ENCODE measurements at regions of chr20 and their contacts with region 1.

Region 1: GRCh38 chr20:21342656-21343345 is 39.7 kb downstream of the XRN2 start:
- DNase-seq: no peak
- H3K4me3 Mint-ChIP-seq: no peak overlapping the region
- H3K27ac Mint-ChIP-seq: no peak overlapping the region
- H3K4me1 Mint-ChIP-seq: no peaks in the 10 kb centered on the region
- H3K27me3 Mint-ChIP-seq: no peaks in the 10 kb centered on the region

Region 2: GRCh38 chr20:21361266-21361665 is 18.5 kb after region 1 on chr20:
- intact Hi-C with region 1: loop called (anchors 2 kb)
- DNase-seq: no peak
- H3K4me3 Mint-ChIP-seq: no peak overlapping the region
- H3K27ac Mint-ChIP-seq: peak overlapping the region; percentile 31
- H3K4me1 Mint-ChIP-seq: peaks cover 22% of the 10 kb centered on the region
- H3K27me3 Mint-ChIP-seq: no peaks in the 10 kb centered on the region

Region 3: DNA sequence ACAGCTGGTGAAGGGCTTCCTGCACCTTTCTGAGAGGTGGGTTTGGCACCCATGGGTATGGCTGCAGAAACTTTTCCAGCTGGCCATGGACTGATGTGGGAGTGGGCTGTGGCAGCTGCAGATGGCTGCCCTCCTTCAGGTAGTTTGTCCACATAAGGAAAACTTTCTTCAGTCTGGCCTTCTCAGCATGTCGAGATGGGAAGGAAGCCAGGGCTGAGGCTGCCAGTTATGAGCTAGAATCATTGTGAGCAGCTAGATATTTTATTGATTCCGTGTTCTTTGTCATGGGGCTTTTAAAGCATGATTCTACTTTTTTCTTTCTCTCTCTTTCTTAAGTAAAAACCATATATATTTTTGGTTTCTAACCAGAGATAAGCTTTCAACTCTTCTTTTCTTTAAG is 37.9 kb after region 1 on chr20:
- intact Hi-C with region 1: loop called (anchors 5 kb)
- DNase-seq: no peak
- H3K4me3 Mint-ChIP-seq: no peak overlapping the region
- H3K27ac Mint-ChIP-seq: no peak overlapping the region
- H3K4me1 Mint-ChIP-seq: peaks cover 7% of the 10 kb centered on the region
- H3K27me3 Mint-ChIP-seq: no peaks in the 10 kb centered on the region

Region 4: DNA sequence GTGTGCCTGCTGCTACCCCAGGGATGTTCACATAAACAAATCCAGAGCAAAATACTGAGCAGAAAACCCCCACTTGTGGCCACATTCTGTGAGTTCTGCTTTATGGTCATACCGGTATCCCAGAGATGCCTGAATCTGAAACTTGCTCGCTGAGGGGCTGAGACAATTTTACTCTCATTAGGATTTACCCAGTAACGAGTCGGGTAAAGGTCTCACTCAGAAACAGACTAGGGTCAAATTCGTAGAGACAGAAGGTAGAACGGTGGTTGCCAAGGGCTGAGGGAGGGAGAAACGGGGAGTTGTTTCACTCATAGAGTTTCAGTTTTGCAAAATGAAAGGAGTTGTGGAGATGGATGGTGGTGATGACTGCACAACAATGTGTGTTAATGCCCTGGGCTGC is 216.5 kb after region 1 on chr20:
- intact Hi-C with region 1: no loop called
- DNase-seq: peak; percentile 24
- H3K4me3 Mint-ChIP-seq: peak overlapping the region; percentile 71
- H3K27ac Mint-ChIP-seq: peak overlapping the region; percentile 59
- H3K4me1 Mint-ChIP-seq: peaks cover 44% of the 10 kb centered on the region
- H3K27me3 Mint-ChIP-seq: peaks cover 5% of the 10 kb centered on the region